Endothelial cell of umbilical vein (primary cell): ENCODE measurements at regions of chrX and their contacts with region 1.

Region 1: GRCh38 chrX:47311932-47312774 is 58.2 kb upstream of the ZNF157 start:
- DNase-seq: peak; percentile 31
- H3K4me3 ChIP-seq: no peak overlapping the region
- H3K27ac ChIP-seq: no peak overlapping the region
- H3K4me1 ChIP-seq: no peaks in the 10 kb centered on the region
- H3K27me3 ChIP-seq: peaks cover 0 to 2% of the 10 kb centered on the region in 2 experiments
- CTCF ChIP-seq: peak; percentile 14 to 48
- POLR2A ChIP-seq: no peak

Region 2: DNA sequence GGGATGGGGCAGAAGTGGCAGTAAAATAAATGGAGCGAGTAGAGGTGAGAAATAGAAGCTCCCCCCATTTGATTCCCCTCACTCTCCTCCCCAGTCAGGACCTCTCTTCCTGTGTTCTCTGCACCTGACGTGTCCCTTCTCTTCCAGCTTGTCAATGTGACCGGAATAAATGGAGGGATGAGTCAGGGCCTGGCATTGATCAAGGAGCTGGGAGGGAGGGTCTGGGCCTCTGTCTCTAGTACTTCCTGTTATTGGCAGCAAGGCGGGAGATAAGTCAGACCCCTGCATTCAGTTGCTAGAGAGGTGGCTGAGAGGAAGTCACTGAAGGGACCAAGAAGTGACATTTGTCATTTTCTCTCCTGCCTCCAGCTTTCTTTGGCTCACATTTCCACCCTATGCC is 206.0 kb after region 1 on chrX:
- CTCF ChIA-PET with region 1: no interaction called
- POLR2A ChIA-PET with region 1: no interaction called
- dilution Hi-C with region 1: no loop called
- intact Hi-C with region 1: loop called (anchors 2 kb)
- DNase-seq: no peak
- H3K4me3 ChIP-seq: no peak overlapping the region
- H3K27ac ChIP-seq: no peak overlapping the region
- H3K4me1 ChIP-seq: peaks cover 7% of the 10 kb centered on the region
- H3K27me3 ChIP-seq: no peaks in the 10 kb centered on the region
- CTCF ChIP-seq: no peak
- POLR2A ChIP-seq: no peak